ENCODE measurements at regions of chr2 and their contacts with region 1.

Region 1: DNA sequence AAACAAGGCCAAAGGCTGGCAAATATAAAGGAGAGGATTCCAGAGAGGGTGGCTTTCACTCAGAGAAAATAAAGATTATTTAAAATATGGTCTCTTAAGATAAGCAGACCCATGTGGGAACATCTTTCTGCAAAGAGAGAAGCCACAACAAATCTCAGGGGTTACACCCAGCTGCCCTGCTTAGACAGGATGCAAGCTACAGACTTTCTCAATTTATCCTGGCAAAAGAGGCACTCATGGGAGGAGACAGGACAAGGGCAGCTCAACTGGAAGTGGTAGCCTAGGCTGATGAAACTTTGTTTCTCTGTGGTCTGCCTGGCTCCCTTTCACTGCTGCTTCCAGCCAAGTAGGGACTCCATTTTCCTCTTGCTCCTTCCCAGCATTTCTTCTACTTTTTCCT is 25.9 kb upstream of the SULT1C4 start:
- DNase-seq: no peak

Region 2: GRCh38 chr2:108396845-108397244 is 45.0 kb after region 1 on chr2:
- intact Hi-C with region 1: loop called in 1 of 2 experiments (anchors 1 kb)
- DNase-seq: no peak

Measured in posterior vena cava (tissue), 2 donors.